ENCODE measurements at regions of chr4 and their contacts with region 1.

Region 1: GRCh38 chr4:139266583-139267257 is 13.3 kb downstream of the MGARP start:
- DNase-seq: peak; percentile 91
- H3K4me3 Mint-ChIP-seq: peak overlapping the region; percentile 52
- H3K27ac Mint-ChIP-seq: peak overlapping the region; percentile 60
- H3K4me1 Mint-ChIP-seq: peaks cover 18% of the 10 kb centered on the region
- H3K27me3 Mint-ChIP-seq: no peaks in the 10 kb centered on the region

Region 2: DNA sequence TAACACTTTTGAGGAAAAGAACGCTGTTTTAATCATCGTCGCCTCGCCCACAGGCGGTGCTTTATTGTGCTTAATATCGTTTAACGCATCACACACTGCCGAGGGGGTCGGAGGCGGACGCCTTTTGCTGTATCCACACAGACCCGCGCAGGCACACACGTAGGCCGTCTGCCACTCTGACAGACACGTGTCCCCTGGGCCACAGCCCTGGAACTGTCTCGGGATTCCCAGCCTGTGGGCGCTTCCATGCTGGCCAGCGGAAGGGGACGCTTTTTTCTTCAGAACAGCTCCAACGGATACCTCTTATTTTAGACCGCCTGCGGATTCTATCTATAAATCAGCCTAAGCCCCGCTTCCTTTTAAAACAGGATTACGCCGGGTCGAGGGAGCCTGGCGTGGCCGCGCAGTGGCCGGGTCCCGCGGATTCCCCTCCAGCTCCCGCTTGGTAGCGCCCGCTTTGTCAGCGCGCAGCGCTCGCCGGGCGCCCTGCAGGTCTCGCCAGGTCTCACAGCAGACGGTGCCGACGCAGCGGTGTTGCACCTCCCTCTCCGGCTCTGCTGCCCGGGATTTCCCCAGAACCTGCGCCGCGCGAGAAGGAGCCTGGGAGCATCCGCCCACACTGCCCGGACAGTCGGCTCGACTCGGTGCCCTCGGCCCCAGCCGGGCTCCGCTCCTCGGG is 251.3 kb before region 1 on chr4 and contains the start of gene NOCT:
- CTCF ChIA-PET with region 1: no interaction called
- intact Hi-C with region 1: loop called (anchors 1 kb)
- DNase-seq: peak; percentile 97
- H3K4me3 Mint-ChIP-seq: peak within 1 kb of the TSS; percentile 91
- H3K27ac Mint-ChIP-seq: peak within 1 kb of the TSS; percentile 96
- H3K4me1 Mint-ChIP-seq: peaks cover 48% of the 10 kb centered on the region
- H3K27me3 Mint-ChIP-seq: no peaks in the 10 kb centered on the region
- total RNA-seq, gene NOCT: 9.3 to 10.4 TPM

Region 3: DNA sequence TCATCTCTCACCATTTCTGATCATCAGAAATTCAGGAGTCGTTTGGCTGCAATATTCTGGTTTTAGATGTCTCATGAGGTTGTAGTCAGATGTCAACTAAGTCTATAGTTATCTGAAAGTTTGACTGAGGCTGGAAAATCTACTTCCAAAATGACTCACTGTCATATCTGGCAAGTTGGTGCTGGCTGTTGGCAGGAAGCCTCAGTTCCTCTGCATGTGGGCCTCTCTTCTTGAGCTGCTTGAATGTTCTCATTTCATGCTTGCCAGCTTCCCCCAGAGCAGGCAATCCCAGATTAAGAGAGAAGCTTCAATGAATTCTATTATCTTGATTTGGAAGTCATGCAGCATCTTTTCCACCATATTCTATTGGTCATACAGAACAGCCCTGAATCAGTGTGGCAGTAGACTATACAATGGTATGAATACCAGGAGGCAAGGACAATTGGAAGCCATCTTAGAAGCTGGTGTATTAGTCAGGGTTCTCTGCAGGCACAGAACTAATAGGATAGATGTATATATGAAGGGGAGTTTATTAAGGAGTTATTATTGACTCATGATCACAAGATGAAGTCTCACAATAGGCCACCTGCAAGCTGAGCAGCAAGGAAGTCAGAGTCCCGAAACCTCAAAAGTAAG is 42.9 kb before region 1 on chr4:
- CTCF ChIA-PET with region 1: interaction called, 5 read pairs
- intact Hi-C with region 1: loop called (anchors 1 kb)
- DNase-seq: peak; percentile 52
- H3K4me3 Mint-ChIP-seq: no peak overlapping the region
- H3K27ac Mint-ChIP-seq: no peak overlapping the region
- H3K4me1 Mint-ChIP-seq: peaks cover 15% of the 10 kb centered on the region
- H3K27me3 Mint-ChIP-seq: no peaks in the 10 kb centered on the region

Region 4: DNA sequence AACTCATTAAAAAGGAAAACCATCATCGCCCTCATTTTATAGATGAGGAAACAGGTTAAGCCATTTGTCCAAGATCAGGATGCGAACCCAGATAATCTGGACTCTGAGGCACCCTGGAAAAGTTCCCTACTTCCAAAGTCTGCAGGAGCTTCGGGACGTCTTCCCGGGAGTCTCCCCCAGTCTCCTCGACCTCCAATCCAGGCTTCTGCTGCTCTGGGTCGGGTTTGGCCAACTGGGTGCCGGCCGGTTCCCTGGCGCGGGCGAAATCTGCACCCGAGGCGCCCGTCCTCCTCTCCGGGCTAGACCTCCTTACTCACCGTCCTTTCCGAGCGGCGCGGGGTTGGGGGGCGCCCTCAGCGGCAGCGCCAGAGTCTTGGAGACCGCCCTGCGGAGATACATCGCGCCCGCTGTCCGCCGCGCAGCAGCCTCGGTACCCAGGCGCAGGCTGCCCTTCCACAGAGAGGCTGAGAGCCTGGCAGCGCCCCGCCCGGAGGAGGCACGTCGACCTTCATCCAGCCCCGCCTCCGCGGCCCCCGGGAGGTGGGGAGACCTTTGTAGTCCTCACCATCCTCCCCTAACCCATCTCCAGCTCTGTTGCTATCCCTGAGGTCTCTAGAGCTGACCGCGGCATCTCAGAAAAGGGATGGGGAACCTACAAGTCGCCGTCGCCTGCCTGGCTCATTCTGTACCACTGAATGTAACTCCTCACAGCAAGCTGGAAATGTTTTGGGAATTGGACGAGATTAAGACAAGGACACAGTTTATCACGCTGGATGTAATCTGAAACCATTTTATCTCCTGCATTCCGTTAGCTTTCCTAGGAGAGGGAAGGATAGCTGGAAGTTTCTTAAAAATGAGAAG is 13.3 kb after region 1 on chr4 and contains the start of gene MGARP:
- CTCF ChIA-PET with region 1: interaction called, 3 read pairs
- intact Hi-C with region 1: loop called (anchors 1 kb)
- DNase-seq: peak; percentile 22
- H3K4me3 Mint-ChIP-seq: peak within 1 kb of the TSS; percentile 65
- H3K27ac Mint-ChIP-seq: no peak within 1 kb of the TSS
- H3K4me1 Mint-ChIP-seq: peaks cover 13% of the 10 kb centered on the region
- H3K27me3 Mint-ChIP-seq: peaks cover 45% of the 10 kb centered on the region
- total RNA-seq, gene MGARP: not detected

Region 5: GRCh38 chr4:139301113-139301820 is 34.5 kb after region 1 on chr4 and contains the start of gene NAA15:
- CTCF ChIA-PET with region 1: interaction called, 16 read pairs
- intact Hi-C with region 1: loop called (anchors 1 kb)
- DNase-seq: peak; percentile 98
- H3K4me3 Mint-ChIP-seq: peak within 1 kb of the TSS; percentile 100
- H3K27ac Mint-ChIP-seq: peak within 1 kb of the TSS; percentile 98
- H3K4me1 Mint-ChIP-seq: peaks cover 56% of the 10 kb centered on the region
- H3K27me3 Mint-ChIP-seq: no peaks in the 10 kb centered on the region
- total RNA-seq, gene NAA15: 91.5 to 94.0 TPM

Region 6: GRCh38 chr4:139324620-139325019 is 57.9 kb after region 1 on chr4:
- CTCF ChIA-PET with region 1: no interaction called
- intact Hi-C with region 1: no loop called
- DNase-seq: no peak
- H3K4me3 Mint-ChIP-seq: no peak overlapping the region
- H3K27ac Mint-ChIP-seq: no peak overlapping the region
- H3K4me1 Mint-ChIP-seq: peaks cover 48% of the 10 kb centered on the region
- H3K27me3 Mint-ChIP-seq: no peaks in the 10 kb centered on the region

Region 7: GRCh38 chr4:139453371-139454110 is 186.8 kb after region 1 on chr4:
- CTCF ChIA-PET with region 1: no interaction called
- intact Hi-C with region 1: loop called (anchors 1 kb)
- DNase-seq: peak; percentile 98
- H3K4me3 Mint-ChIP-seq: peak overlapping the region; percentile 97
- H3K27ac Mint-ChIP-seq: peak overlapping the region; percentile 98
- H3K4me1 Mint-ChIP-seq: peaks cover 50% of the 10 kb centered on the region
- H3K27me3 Mint-ChIP-seq: no peaks in the 10 kb centered on the region

Measured in activated naive CD4-positive, alpha-beta T cell treated with anti-CD3 and anti-CD28 coated beads for 36 hours (primary cell).